ENCODE measurements at regions of chr19 and their contacts with region 1.

Region 1: DNA sequence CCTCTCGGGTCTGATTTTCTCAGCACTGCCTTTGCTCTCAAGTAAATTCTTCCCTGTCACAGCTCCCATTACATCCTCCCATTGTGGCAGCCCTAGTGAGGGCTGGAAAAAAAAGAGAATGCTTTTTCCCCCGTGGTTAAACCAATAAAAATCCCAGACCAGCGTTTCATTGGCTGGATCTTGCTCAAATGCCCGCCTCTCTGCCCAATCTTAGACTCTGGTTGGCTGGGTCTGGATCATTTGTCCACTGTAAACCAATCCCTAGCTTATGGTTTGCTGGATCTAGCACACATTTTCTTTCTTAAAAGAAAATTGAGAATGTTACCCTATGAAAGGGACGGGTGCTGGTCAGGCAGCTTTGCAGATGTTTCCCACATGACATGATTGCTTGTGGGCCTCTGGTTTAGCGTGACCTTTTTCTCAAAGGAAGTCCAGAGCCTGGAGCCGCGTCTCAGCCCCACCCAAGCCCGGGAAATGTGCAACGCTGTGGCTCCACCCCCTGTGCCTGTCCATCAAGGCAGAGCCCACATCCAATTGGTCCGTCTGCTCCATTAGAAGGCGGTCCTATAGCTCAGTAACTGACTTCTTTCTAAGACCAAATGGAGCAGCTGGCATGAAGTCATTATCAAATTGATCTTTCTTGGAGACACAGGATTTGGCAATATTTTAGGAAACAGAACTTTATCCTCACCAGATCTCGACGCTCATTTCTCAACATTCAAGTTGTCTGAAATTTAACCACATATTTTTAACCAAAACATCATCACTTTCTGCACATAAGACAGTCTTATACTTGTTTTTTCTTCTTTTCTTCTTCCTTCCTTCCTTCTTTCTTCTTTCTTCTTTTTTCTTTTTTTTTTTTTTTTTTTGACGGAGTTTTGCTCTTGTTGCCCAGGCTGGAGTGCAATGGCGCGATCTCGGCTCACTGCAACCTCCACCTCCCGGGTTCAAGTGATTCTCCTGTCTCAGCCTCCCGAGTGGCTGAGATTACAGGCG is 2.6 kb upstream of the MCEMP1 start:
- DNase-seq: peak; percentile 84 to 85
- ATAC-seq: no peak
- H3K4me3 ChIP-seq: no peak overlapping the region
- H3K27ac ChIP-seq: no peak overlapping the region
- H3K4me1 ChIP-seq: no peaks in the 10 kb centered on the region
- H3K27me3 ChIP-seq: no peaks in the 10 kb centered on the region

Region 2: DNA sequence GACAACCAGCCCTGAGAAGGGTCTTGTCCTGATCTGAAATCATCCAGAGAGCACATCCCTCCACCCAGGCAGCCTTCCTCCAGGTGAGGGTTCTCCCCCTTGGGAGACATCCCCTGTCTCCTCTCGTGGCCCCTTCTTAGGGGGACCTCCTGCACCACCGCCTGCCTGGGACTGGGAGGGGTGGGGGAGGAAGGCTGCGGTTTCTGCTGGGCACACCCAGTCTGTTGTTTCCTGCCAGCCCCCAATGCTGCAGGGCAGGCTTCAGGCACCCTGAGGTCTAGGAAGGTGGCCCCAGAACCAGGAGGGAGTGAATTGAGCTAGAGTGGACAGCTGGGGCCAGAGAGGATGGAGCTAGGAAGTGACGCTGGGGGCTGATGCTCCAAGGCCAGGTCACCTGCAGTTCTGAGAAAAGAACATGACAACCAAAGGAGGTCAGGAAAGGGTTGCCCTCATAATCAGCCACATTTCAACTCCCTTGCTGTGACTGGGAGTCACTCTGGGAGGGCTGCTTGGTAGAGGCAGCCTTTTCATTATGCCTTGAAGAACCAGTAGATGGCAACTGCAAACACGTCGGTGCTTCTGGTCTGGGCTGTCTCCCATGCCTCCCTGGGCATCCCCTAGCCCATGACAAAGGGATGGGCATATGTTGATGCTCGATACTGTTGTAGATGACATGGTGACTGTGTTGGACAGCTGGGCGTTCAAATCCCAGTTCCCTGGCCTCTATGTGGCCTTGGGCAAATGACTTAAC is 324.2 kb before region 1 on chr19:
- intact Hi-C with region 1: loop called in 1 of 2 experiments (anchors 5 kb)
- DNase-seq: peak in 1 of 2 donors; percentile 66
- ATAC-seq: no peak
- H3K4me3 ChIP-seq: no peak overlapping the region
- H3K27ac ChIP-seq: no peak overlapping the region
- H3K4me1 ChIP-seq: no peaks in the 10 kb centered on the region
- H3K27me3 ChIP-seq: no peaks in the 10 kb centered on the region

Region 3: GRCh38 chr19:7595466-7596133 is 78.7 kb before region 1 on chr19 and contains the start of gene CAMSAP3:
- intact Hi-C with region 1: no loop called
- DNase-seq: no peak
- ATAC-seq: no peak
- H3K4me3 ChIP-seq: peak within 1 kb of the TSS; percentile 22 to 47
- H3K27ac ChIP-seq: no peak within 1 kb of the TSS
- H3K4me1 ChIP-seq: no peaks in the 10 kb centered on the region
- H3K27me3 ChIP-seq: no peaks in the 10 kb centered on the region
- total RNA-seq, gene CAMSAP3: not detected

Region 4: DNA sequence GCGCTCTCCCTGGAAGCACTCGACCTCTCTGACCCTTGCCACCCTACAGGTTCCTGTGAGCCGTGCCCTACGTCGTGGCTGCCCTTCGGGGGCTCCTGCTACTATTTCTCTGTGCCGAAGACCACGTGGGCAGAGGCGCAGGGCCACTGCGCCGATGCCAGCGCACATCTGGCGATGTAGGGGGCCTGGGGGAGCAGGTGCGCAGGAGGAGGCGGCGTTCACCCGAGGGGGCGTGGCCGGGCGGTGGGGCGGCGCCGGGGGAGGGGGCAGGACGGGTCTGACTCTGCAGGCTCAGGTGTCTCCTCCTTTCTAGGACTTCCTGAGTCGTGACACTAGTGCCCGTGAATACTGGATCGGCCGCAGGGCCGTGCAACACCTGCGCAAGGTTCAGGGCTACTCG is 115.1 kb after region 1 on chr19:
- intact Hi-C with region 1: no loop called
- DNase-seq: no peak
- ATAC-seq: no peak
- H3K4me3 ChIP-seq: no peak overlapping the region
- H3K27ac ChIP-seq: no peak overlapping the region
- H3K4me1 ChIP-seq: no peaks in the 10 kb centered on the region
- H3K27me3 ChIP-seq: no peaks in the 10 kb centered on the region

Region 5: DNA sequence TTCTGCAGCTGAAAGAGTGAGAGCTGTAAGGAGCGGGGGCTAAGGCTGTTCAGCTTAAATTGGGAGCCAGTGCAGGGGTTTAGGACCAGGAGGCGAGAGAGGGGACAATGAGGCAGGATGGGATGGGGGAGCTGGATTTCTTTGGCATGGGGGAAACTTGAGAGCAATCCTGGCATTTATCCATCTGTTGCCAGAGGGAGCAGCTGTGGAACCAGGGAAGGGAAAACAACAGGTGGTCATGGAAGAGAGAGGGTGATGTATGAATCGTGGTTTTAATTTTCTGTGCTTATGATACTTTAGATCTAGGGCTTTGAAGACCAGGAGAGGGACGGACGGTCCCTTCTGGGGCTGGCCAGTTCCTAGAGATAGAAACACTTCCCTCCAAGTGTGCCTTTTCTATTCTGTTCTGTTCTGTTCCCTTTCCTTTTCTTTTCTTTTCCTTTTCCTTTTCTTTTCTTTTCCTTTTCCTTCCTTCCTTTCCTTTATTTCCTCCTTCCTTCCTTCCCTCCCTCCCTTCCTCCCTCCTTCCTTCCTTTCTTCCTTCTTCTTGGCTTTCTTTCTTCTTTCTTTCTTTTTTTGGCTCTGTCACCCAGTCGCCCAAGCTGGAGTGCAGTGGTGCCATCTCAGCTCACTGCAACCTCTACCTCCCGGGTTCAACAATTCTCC is 362.3 kb after region 1 on chr19:
- intact Hi-C with region 1: no loop called
- DNase-seq: no peak
- ATAC-seq: no peak
- H3K4me3 ChIP-seq: no peak overlapping the region
- H3K27ac ChIP-seq: no peak overlapping the region
- H3K4me1 ChIP-seq: no peaks in the 10 kb centered on the region
- H3K27me3 ChIP-seq: no peaks in the 10 kb centered on the region